CD8-positive, alpha-beta T cell (primary cell): ENCODE measurements at regions of chr3 and their contacts with region 1.

Region 1: GRCh38 chr3:23888617-23889228 is 28.1 kb downstream of the NKIRAS1 start:
- DNase-seq: peak in 3 of 9 experiments; percentile 17 to 63 (median 54)
- ATAC-seq: peak; percentile 56
- H3K4me3 ChIP-seq: no peak overlapping the region
- H3K4me3 Mint-ChIP-seq: no peak overlapping the region
- H3K27ac ChIP-seq: no peak overlapping the region
- H3K27ac Mint-ChIP-seq: peak overlapping the region; percentile 47
- H3K4me1 ChIP-seq: no peaks in the 10 kb centered on the region
- H3K4me1 Mint-ChIP-seq: peaks cover 2% of the 10 kb centered on the region
- H3K27me3 ChIP-seq: no peaks in the 10 kb centered on the region
- H3K27me3 Mint-ChIP-seq: no peaks in the 10 kb centered on the region
- CTCF ChIP-seq: peak; percentile 96

Region 2: DNA sequence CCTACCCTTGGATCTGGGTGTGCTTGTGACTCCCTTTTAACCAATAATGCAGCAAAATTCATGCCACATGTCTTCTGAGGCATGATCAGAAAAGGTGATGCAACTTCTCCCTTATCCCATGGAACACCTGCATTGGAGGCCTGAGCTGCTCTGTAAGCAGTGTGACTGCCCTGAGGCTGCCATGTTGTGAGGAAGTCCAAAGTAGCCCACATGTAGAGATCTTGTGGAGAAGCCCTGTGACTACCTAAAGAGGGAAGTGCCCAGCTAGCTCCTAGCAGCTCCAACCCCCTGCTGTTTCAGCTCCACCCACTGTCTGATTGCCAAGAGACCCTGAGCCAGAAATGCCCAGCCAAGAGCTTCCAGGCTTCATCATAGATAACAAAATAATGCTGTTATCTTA is 50.0 kb after region 1 on chr3:
- CTCF ChIA-PET with region 1: no interaction called
- POLR2A ChIA-PET with region 1: no interaction called
- intact Hi-C with region 1: loop called in 1 of 2 experiments (anchors 1 kb)
- DNase-seq: no peak
- ATAC-seq: no peak
- H3K4me3 ChIP-seq: no peak overlapping the region
- H3K4me3 Mint-ChIP-seq: no peak overlapping the region
- H3K27ac ChIP-seq: no peak overlapping the region
- H3K27ac Mint-ChIP-seq: no peak overlapping the region
- H3K4me1 ChIP-seq: no peaks in the 10 kb centered on the region
- H3K4me1 Mint-ChIP-seq: peaks cover 2% of the 10 kb centered on the region
- H3K27me3 ChIP-seq: no peaks in the 10 kb centered on the region
- H3K27me3 Mint-ChIP-seq: peaks cover 5% of the 10 kb centered on the region
- CTCF ChIP-seq: no peak

Region 3: DNA sequence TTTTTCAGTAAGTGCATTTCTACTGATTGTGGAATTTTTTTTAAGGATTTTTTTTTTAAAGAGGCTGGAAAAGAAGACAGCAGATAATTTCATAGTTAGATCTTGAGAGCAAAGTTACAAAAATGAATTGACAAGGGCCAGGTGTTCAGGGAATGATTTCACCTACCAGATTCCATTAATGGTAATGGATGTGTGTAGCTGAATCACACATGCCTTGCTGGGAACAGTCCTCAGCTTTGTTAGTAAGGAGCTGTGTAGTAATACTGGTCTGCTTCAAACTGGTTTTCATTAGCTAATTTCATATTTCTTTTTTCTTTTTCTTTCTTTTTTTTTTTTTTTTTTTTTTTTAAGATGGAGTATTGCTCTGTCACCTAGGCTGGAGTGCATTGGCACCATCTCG is 72.3 kb after region 1 on chr3:
- CTCF ChIA-PET with region 1: interaction called, 4 read pairs
- POLR2A ChIA-PET with region 1: no interaction called
- intact Hi-C with region 1: loop called in 1 of 2 experiments (anchors 5 kb)
- DNase-seq: no peak
- ATAC-seq: no peak
- H3K4me3 ChIP-seq: no peak overlapping the region
- H3K4me3 Mint-ChIP-seq: no peak overlapping the region
- H3K27ac ChIP-seq: no peak overlapping the region
- H3K27ac Mint-ChIP-seq: no peak overlapping the region
- H3K4me1 ChIP-seq: no peaks in the 10 kb centered on the region
- H3K4me1 Mint-ChIP-seq: peaks cover 45% of the 10 kb centered on the region
- H3K27me3 ChIP-seq: no peaks in the 10 kb centered on the region
- H3K27me3 Mint-ChIP-seq: no peaks in the 10 kb centered on the region
- CTCF ChIP-seq: no peak

Region 4: DNA sequence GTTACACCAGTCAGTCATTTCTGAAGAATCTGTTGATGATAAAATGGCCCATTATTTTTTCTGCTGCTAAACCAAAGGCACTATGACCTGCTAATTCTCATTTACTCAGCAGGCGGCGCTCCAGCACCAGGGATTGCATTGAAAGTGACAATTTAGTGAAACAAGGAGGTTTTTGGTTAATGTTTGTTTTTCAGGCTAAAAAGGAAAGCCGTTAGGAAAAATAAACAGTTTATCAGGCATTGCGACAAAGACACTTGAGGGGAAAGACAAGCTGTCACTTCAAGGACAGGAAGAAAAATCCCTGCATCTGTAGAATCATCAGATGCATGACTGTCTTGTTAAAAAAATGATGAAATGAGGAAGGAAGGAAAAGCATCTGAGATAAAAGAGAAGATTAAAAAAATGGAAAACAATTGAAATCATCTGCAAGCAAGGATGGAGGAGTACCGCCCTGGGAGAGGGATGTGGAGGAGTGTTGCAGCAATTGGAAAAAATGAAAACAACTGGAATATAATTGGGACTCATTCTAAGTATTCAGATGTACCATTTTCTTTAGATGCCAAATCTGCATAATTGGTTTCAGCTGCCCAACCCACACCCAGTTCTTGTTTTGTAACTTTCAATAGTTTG is 110.4 kb after region 1 on chr3:
- CTCF ChIA-PET with region 1: interaction called, 9 read pairs
- POLR2A ChIA-PET with region 1: no interaction called
- intact Hi-C with region 1: loop called (anchors 1 to 2 kb)
- DNase-seq: peak; percentile 22 to 64 (median 53)
- ATAC-seq: no peak
- H3K4me3 ChIP-seq: no peak overlapping the region
- H3K4me3 Mint-ChIP-seq: no peak overlapping the region
- H3K27ac ChIP-seq: no peak overlapping the region
- H3K27ac Mint-ChIP-seq: no peak overlapping the region
- H3K4me1 ChIP-seq: no peaks in the 10 kb centered on the region
- H3K4me1 Mint-ChIP-seq: no peaks in the 10 kb centered on the region
- H3K27me3 ChIP-seq: no peaks in the 10 kb centered on the region
- H3K27me3 Mint-ChIP-seq: peaks cover 4% of the 10 kb centered on the region
- CTCF ChIP-seq: peak; percentile 88

Region 5: GRCh38 chr3:24237971-24238767 is 349.4 kb after region 1 on chr3:
- CTCF ChIA-PET with region 1: interaction called, 20 read pairs
- POLR2A ChIA-PET with region 1: no interaction called
- intact Hi-C with region 1: loop called in 1 of 2 experiments (anchors 1 kb)
- DNase-seq: peak in 3 of 9 experiments; percentile 16 to 64 (median 50)
- ATAC-seq: peak; percentile 62
- H3K4me3 ChIP-seq: no peak overlapping the region
- H3K4me3 Mint-ChIP-seq: no peak overlapping the region
- H3K27ac ChIP-seq: no peak overlapping the region
- H3K27ac Mint-ChIP-seq: no peak overlapping the region
- H3K4me1 ChIP-seq: no peaks in the 10 kb centered on the region
- H3K4me1 Mint-ChIP-seq: no peaks in the 10 kb centered on the region
- H3K27me3 ChIP-seq: no peaks in the 10 kb centered on the region
- H3K27me3 Mint-ChIP-seq: peaks cover 3% of the 10 kb centered on the region
- CTCF ChIP-seq: peak; percentile 19

Region 6: DNA sequence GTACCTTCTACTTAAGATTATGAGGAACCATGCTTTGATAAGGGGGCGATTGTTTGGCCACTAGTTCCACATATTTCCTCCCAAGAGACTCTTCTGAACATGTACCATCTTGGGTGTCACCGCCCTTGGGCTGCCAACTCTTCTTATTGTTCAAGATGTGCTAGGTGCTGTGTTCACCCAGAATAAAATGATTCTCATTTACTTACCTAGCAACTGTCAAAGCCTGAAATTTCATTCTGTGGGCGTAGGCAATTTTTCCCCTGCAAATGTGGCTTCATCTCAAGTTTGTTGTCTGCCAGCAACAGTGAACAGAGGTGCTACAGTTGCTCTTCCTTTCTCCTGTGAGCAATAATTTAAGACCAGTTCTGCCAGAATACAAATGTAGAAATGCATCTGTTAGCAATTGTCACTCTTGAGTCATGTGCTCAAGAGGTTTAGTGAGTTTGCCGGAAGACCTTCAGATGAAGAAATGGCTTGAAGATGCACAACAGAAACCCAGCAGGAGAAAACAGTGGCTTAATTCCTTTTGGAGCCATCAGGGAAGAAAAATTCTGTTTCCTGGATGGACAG is 1498.0 kb after region 1 on chr3:
- CTCF ChIA-PET with region 1: no interaction called
- POLR2A ChIA-PET with region 1: no interaction called
- intact Hi-C with region 1: no loop called
- DNase-seq: no peak
- ATAC-seq: no peak
- H3K4me3 ChIP-seq: no peak overlapping the region
- H3K4me3 Mint-ChIP-seq: no peak overlapping the region
- H3K27ac ChIP-seq: no peak overlapping the region
- H3K27ac Mint-ChIP-seq: no peak overlapping the region
- H3K4me1 ChIP-seq: no peaks in the 10 kb centered on the region
- H3K4me1 Mint-ChIP-seq: no peaks in the 10 kb centered on the region
- H3K27me3 ChIP-seq: no peaks in the 10 kb centered on the region
- H3K27me3 Mint-ChIP-seq: no peaks in the 10 kb centered on the region
- CTCF ChIP-seq: no peak